ENCODE measurements at regions of chr17 and their contacts with region 1.

Region 1: DNA sequence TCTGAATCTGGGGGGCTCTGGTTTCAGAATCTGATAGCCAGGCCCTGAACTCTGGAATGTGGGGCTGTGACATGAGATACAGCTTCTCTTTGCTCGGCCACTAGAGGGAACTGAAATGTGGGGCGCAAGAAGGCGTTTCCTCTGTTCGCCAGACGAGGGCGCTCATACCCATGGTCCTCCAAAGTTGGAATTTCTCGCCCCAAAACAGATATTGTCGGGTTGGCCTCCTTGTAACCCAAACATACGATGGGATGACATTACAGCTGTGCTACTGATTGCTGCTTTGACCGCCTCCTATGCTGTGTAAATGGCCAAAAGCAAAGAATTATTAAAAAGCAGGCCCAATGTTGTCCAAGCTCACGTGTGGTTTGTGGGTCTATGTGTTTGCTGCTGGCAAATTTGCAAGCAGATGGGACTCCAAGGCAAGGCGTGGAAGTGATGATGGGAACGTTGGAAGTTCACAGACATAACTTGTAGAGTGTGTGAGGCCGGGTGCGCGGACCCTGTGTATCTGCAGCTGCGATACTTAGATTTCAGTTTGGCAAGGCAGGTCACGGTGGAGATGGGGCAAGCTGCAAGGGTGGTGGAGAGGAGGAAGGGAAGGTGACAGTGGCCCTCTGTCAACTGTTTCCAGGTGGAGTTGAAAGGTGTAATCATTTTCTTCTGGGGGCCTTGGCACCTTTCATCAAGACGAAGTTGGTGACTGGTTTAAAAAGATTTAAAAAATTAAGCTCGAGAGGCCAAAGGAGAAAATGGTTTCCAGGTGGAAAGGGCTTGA is 13.0 kb upstream of the MSI2 start:
- DNase-seq: peak; percentile 87
- ATAC-seq: peak; percentile 83
- H3K4me3 Mint-ChIP-seq: no peak overlapping the region
- H3K27ac Mint-ChIP-seq: peak overlapping the region; percentile 29
- H3K4me1 Mint-ChIP-seq: peaks cover 4% of the 10 kb centered on the region
- H3K27me3 Mint-ChIP-seq: peaks cover 2% of the 10 kb centered on the region

Region 2: DNA sequence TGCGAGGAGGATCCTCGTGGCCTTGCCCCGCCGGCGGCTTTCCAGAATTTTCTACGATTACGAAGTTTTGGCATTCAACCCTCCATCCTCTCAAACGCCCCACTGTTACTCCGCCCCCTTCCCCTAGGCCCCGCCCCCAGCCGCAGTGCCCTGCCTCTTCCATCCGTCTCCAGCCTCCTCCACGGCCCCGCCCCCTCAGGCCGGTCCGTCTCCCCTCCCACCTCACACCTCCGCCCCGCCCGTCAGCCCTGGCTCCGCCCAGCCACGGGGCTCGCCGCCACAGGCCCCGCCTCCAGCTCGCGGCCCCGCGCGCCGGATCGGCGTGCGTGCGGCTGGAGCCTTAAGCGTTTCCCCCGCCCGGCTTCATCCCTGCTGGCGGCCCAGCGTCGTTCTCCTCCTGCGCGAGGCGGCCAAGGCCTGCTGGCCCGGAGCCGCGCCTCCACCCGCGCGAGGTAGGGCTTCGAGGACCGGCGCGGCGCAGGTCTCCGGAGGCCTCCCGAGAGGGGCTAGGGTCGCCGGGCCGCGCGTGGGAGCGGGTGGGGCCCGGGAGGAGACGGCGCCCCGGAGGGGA is 409.5 kb before region 1 on chr17 and contains the starts of genes C17orf67 and DGKE:
- CTCF ChIA-PET with region 1: no interaction called
- POLR2A ChIA-PET with region 1: no interaction called
- intact Hi-C with region 1: no loop called
- DNase-seq: peak; percentile 100
- ATAC-seq: peak; percentile 93
- H3K4me3 Mint-ChIP-seq: peak within 1 kb of the TSS; percentile 86
- H3K27ac Mint-ChIP-seq: peak within 1 kb of the TSS; percentile 90
- H3K4me1 Mint-ChIP-seq: peaks cover 62% of the 10 kb centered on the region
- H3K27me3 Mint-ChIP-seq: no peaks in the 10 kb centered on the region
- total RNA-seq, gene C17orf67: 4.0 to 5.0 TPM
- total RNA-seq, gene DGKE: 22.4 to 27.4 TPM

Region 3: DNA sequence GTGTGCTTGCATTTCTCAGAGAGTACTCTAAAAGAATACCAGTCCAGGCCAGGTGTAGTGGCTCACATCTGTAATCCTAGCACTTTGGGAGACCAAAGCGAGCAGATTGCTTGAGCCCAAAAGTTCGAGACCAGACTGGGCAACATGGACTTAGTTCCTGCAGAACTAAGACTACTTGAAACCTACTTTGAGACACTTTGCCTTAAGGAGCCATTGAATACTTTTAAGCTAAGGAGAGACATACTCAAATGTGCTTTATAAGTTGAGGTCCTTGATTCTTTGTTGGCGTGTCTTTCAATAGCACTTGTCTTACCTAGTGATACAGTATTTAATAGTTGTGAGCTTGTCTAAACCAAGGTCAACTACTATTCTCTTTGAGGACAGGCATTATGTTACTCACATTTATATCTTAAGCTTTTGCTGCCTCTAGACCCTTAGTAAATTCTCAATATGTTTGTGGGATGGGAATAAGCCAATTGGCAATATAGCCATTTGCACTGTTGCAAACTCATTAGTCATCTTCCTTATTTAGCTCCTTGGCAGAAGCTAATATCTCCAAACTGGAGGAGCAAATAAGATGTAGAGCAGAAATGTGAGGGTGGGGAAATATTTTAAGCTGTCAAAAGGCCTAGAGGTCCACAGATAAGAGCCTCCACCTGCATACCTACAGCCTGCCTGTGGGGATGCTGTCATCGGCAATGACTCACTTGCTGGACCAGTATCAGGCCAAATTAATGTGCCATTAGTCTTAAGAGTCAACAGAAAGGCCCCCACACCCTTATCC is 249.2 kb before region 1 on chr17:
- CTCF ChIA-PET with region 1: no interaction called
- POLR2A ChIA-PET with region 1: no interaction called
- intact Hi-C with region 1: no loop called
- DNase-seq: no peak
- ATAC-seq: no peak
- H3K4me3 Mint-ChIP-seq: no peak overlapping the region
- H3K27ac Mint-ChIP-seq: no peak overlapping the region
- H3K4me1 Mint-ChIP-seq: no peaks in the 10 kb centered on the region
- H3K27me3 Mint-ChIP-seq: no peaks in the 10 kb centered on the region

Region 4: GRCh38 chr17:57130761-57131461 is 112.4 kb before region 1 on chr17:
- CTCF ChIA-PET with region 1: interaction called, 3 read pairs
- POLR2A ChIA-PET with region 1: no interaction called
- intact Hi-C with region 1: loop called in 1 of 2 experiments (anchors 1 kb)
- DNase-seq: peak; percentile 91
- ATAC-seq: peak; percentile 84
- H3K4me3 Mint-ChIP-seq: no peak overlapping the region
- H3K27ac Mint-ChIP-seq: no peak overlapping the region
- H3K4me1 Mint-ChIP-seq: peaks cover 5% of the 10 kb centered on the region
- H3K27me3 Mint-ChIP-seq: no peaks in the 10 kb centered on the region

Region 5: GRCh38 chr17:57255776-57256681 is 12.7 kb after region 1 on chr17 and contains the start of gene MSI2:
- CTCF ChIA-PET with region 1: interaction called, 31 read pairs
- POLR2A ChIA-PET with region 1: no interaction called
- intact Hi-C with region 1: no loop called
- DNase-seq: peak; percentile 93
- ATAC-seq: peak; percentile 75
- H3K4me3 Mint-ChIP-seq: peak within 1 kb of the TSS; percentile 80
- H3K27ac Mint-ChIP-seq: peak within 1 kb of the TSS; percentile 79
- H3K4me1 Mint-ChIP-seq: peaks cover 42% of the 10 kb centered on the region
- H3K27me3 Mint-ChIP-seq: no peaks in the 10 kb centered on the region
- total RNA-seq, gene MSI2: 55.3 to 57.2 TPM

Region 6: GRCh38 chr17:57279432-57279831 is 36.1 kb after region 1 on chr17:
- CTCF ChIA-PET with region 1: interaction called, 11 read pairs
- POLR2A ChIA-PET with region 1: no interaction called
- intact Hi-C with region 1: no loop called
- DNase-seq: no peak
- ATAC-seq: no peak
- H3K4me3 Mint-ChIP-seq: no peak overlapping the region
- H3K27ac Mint-ChIP-seq: no peak overlapping the region
- H3K4me1 Mint-ChIP-seq: peaks cover 76% of the 10 kb centered on the region
- H3K27me3 Mint-ChIP-seq: no peaks in the 10 kb centered on the region

Region 7: GRCh38 chr17:57440522-57441485 is 197.4 kb after region 1 on chr17:
- CTCF ChIA-PET with region 1: interaction called, 24 read pairs
- POLR2A ChIA-PET with region 1: interaction called, 3 read pairs
- intact Hi-C with region 1: loop called (anchors 1 kb)
- DNase-seq: peak; percentile 93
- ATAC-seq: peak; percentile 86
- H3K4me3 Mint-ChIP-seq: peak overlapping the region; percentile 38
- H3K27ac Mint-ChIP-seq: peak overlapping the region; percentile 95
- H3K4me1 Mint-ChIP-seq: peaks cover 85% of the 10 kb centered on the region
- H3K27me3 Mint-ChIP-seq: no peaks in the 10 kb centered on the region

Region 8: DNA sequence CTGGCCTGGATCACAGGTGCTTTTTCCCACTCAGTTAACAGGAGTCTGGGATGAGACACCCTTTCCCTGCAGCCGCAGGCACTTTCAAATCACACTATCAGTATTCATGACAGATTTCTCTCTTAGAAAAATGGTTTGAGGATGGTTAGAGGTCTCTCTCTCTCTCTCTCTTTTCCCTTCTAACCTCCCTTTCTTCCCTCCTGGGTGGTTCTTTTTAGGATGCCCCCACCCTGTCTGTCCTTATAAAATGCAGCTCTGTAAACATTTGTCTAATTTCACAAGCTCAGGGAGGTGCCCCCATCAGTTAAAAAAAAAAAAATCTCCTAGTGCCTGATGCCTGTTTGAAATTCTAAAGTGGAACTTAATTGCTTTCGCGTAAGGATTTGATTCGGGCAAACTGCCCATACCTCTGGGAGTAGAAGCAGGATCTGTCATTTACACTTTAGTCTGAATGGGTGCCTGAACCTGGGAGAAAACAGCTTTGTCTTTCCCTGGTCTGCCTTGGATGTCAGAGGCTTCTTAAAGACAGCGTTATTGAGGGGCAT is 342.9 kb after region 1 on chr17:
- CTCF ChIA-PET with region 1: no interaction called
- POLR2A ChIA-PET with region 1: no interaction called
- intact Hi-C with region 1: no loop called
- DNase-seq: no peak
- ATAC-seq: no peak
- H3K4me3 Mint-ChIP-seq: no peak overlapping the region
- H3K27ac Mint-ChIP-seq: no peak overlapping the region
- H3K4me1 Mint-ChIP-seq: peaks cover 5% of the 10 kb centered on the region
- H3K27me3 Mint-ChIP-seq: no peaks in the 10 kb centered on the region

Region 9: GRCh38 chr17:57597531-57598453 is 354.4 kb after region 1 on chr17:
- CTCF ChIA-PET with region 1: interaction called, 11 read pairs
- POLR2A ChIA-PET with region 1: no interaction called
- intact Hi-C with region 1: no loop called
- DNase-seq: peak; percentile 53
- ATAC-seq: no peak
- H3K4me3 Mint-ChIP-seq: no peak overlapping the region
- H3K27ac Mint-ChIP-seq: peak overlapping the region; percentile 81
- H3K4me1 Mint-ChIP-seq: peaks cover 50% of the 10 kb centered on the region
- H3K27me3 Mint-ChIP-seq: no peaks in the 10 kb centered on the region

Region 10: DNA sequence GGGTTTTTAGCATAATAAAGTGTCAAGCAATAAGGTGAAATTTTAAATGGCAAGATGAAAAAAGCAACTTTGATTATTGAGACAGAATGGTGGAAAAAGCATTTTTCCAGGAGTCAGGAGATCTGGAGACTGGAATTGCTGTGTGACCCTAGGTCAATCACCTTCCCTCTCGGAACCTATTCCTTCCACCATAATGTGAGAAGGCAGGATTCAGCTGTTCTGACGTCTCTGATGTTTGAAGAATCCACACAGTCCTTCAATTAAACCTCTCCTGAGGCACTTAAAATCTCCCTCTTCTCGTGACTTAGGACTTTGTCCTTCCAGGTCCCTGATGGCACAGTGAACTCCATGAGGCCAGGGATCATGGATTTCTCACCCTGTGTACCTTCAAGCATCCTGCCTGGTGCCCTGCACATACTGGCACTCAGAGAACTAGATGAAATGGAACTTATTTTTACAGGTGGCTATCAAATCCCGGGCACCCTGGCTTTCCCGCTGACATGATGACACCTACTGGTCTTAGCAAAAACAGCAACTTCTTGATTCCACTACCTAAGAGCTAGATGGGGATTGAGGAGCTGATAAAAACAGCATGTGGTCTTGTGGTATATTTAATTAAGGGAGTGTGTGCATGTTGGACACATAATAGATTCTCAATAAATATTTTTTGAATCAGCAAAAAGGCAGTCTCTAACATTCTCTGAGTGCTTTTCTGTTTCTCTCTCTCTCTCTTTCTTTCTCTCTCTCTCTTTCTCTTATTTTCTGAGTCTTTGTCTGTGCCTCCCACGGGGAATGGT is 504.1 kb after region 1 on chr17:
- CTCF ChIA-PET with region 1: interaction called, 35 read pairs
- POLR2A ChIA-PET with region 1: no interaction called
- intact Hi-C with region 1: loop called (anchors 1 kb)
- DNase-seq: peak; percentile 64
- ATAC-seq: peak; percentile 68
- H3K4me3 Mint-ChIP-seq: no peak overlapping the region
- H3K27ac Mint-ChIP-seq: no peak overlapping the region
- H3K4me1 Mint-ChIP-seq: no peaks in the 10 kb centered on the region
- H3K27me3 Mint-ChIP-seq: peaks cover 2% of the 10 kb centered on the region

Measured in activated CD4-positive, alpha-beta T cell treated with anti-CD3 and anti-CD28 coated beads for 36 hours (primary cell).